Sigmoid colon (tissue), 7 donors: ENCODE measurements at regions of chr12 and their contacts with region 1.

Region 1: GRCh38 chr12:75334384-75335030 is at the start of gene GLIPR1L1:
- DNase-seq: peak; percentile 93
- H3K4me3 ChIP-seq: peak within 1 kb of the TSS; percentile 5 to 51 (median 40)
- H3K27ac ChIP-seq: peak within 1 kb of the TSS in 3 of 4 donors; percentile 5 to 63 (median 32)
- H3K4me1 ChIP-seq: peaks cover 0 to 13% (median 6%) of the 10 kb centered on the region in 4 donors
- H3K27me3 ChIP-seq: no peaks in the 10 kb centered on the region
- CTCF ChIP-seq: peak; percentile 59 to 95 (median 84)
- EP300 ChIP-seq: no peak
- POLR2A ChIP-seq: no peak
- total RNA-seq, gene GLIPR1L1: not detected

Region 2: DNA sequence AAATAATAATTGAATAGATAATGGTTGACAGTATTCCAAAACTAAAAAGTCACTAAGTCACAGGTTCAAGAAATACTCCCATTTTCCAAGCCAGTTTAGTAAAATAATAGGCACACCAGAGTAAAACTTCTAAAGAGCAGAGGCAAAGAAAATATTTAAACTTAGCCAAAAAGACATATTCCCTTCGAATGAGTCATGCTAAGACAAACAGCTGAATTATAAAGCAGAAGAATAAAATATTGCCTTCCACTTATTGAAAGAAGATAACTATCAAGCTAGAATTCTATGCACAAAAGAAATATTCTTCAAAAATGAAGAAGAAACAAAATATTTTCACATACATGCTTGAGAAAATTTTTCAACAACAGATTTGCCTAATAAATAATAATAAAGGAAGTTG is 109.0 kb before region 1 on chr12:
- intact Hi-C with region 1: no loop called
- DNase-seq: no peak
- H3K4me3 ChIP-seq: no peak overlapping the region
- H3K27ac ChIP-seq: no peak overlapping the region
- H3K4me1 ChIP-seq: no peaks in the 10 kb centered on the region
- H3K27me3 ChIP-seq: no peaks in the 10 kb centered on the region
- CTCF ChIP-seq: no peak
- EP300 ChIP-seq: no peak
- POLR2A ChIP-seq: no peak

Region 3: DNA sequence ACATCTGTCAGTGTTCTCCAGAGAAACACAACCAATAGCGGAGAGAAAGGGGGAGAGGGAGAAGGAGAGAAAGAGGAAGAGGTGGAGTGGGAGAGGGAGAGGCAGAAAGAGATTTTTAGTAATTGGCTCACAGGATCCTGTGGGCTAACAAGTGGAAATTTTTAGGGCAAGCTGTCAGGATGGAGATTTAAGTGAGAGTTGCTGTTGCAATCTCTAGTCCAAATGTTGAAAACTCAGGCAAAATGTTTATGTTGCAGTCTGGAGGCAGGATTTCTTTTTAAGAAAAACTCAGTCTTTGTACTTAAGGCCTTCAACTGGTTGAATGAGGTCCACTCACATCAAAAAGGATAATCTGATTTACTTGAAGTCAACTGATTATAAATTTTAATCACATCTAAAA is 43.8 kb after region 1 on chr12:
- intact Hi-C with region 1: no loop called
- DNase-seq: no peak
- H3K4me3 ChIP-seq: no peak overlapping the region
- H3K27ac ChIP-seq: peak overlapping the region in 1 of 4 donors; percentile 52
- H3K4me1 ChIP-seq: no peaks in the 10 kb centered on the region
- H3K27me3 ChIP-seq: no peaks in the 10 kb centered on the region
- CTCF ChIP-seq: no peak
- EP300 ChIP-seq: no peak
- POLR2A ChIP-seq: no peak

Region 4: GRCh38 chr12:75390899-75391538 is 56.5 kb after region 1 on chr12 and contains the start of gene GLIPR1L2:
- intact Hi-C with region 1: loop called (anchors 5 kb)
- DNase-seq: peak; percentile 98
- H3K4me3 ChIP-seq: peak within 1 kb of the TSS; percentile 38 to 63 (median 58)
- H3K27ac ChIP-seq: peak within 1 kb of the TSS; percentile 86 to 92 (median 88)
- H3K4me1 ChIP-seq: peaks cover 0 to 29% (median 19%) of the 10 kb centered on the region in 4 donors
- H3K27me3 ChIP-seq: no peaks in the 10 kb centered on the region
- CTCF ChIP-seq: peak; percentile 63 to 79 (median 72)
- EP300 ChIP-seq: no peak
- POLR2A ChIP-seq: peak; percentile 39 to 63
- total RNA-seq, gene GLIPR1L2: 1.1 to 3.0 (median 1.1) TPM in 3 of 4 donors, not detected in the other

Region 5: DNA sequence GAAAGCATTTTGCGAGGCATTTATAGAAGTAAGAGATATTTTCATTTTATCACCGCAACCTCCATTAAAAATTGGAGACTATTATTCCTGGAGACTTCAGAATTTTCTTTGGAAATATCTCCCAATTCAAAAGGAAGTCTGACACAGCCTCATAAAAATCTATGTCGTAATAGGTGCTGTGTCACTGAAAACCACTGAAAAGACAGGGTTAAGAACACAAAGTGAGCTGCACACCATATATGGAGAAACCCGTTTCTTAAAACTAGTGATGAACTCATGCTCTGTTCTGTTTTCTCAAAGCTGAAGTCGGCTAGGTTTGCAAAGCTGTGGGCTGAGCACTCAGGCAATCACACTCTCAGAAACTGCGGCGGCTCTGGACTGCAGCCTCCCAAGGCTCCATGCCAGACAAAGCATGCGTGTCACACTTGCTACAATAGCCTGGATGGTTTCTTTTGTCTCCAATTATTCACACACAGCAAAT is 146.0 kb after region 1 on chr12 and contains the start of gene GLIPR1:
- intact Hi-C with region 1: loop called (anchors 1 kb)
- DNase-seq: peak; percentile 92
- H3K4me3 ChIP-seq: peak within 1 kb of the TSS; percentile 25 to 56 (median 44)
- H3K27ac ChIP-seq: peak within 1 kb of the TSS; percentile 74 to 87 (median 76)
- H3K4me1 ChIP-seq: peaks cover 0 to 46% (median 39%) of the 10 kb centered on the region in 4 donors
- H3K27me3 ChIP-seq: no peaks in the 10 kb centered on the region
- CTCF ChIP-seq: no peak
- EP300 ChIP-seq: peak in 1 of 4 donors; percentile 25
- POLR2A ChIP-seq: peak; percentile 25 to 47
- total RNA-seq, gene GLIPR1: 14.6 to 20.9 (median 17.4) TPM

Region 6: GRCh38 chr12:75511116-75512048 is 176.9 kb after region 1 on chr12 and contains the start of gene KRR1:
- intact Hi-C with region 1: loop called (anchors 5 kb)
- DNase-seq: peak; percentile 97
- H3K4me3 ChIP-seq: peak within 1 kb of the TSS; percentile 75 to 90 (median 84)
- H3K27ac ChIP-seq: peak within 1 kb of the TSS; percentile 77 to 81 (median 77)
- H3K4me1 ChIP-seq: peaks cover 0 to 21% (median 17%) of the 10 kb centered on the region in 4 donors
- H3K27me3 ChIP-seq: no peaks in the 10 kb centered on the region
- CTCF ChIP-seq: no peak
- EP300 ChIP-seq: no peak
- POLR2A ChIP-seq: peak in 1 of 2 donors; percentile 32
- total RNA-seq, gene KRR1: 12.7 to 40.0 (median 29.5) TPM

Region 7: GRCh38 chr12:75684678-75685601 is 350.4 kb after region 1 on chr12:
- intact Hi-C with region 1: no loop called
- DNase-seq: no peak
- H3K4me3 ChIP-seq: no peak overlapping the region
- H3K27ac ChIP-seq: peak overlapping the region in 2 of 4 donors; percentile 33 to 36
- H3K4me1 ChIP-seq: peaks cover 0 to 7% (median 3%) of the 10 kb centered on the region in 4 donors
- H3K27me3 ChIP-seq: no peaks in the 10 kb centered on the region
- CTCF ChIP-seq: no peak
- EP300 ChIP-seq: no peak
- POLR2A ChIP-seq: no peak